ENCODE measurements at regions of chr3 and their contacts with region 1.

Region 1: DNA sequence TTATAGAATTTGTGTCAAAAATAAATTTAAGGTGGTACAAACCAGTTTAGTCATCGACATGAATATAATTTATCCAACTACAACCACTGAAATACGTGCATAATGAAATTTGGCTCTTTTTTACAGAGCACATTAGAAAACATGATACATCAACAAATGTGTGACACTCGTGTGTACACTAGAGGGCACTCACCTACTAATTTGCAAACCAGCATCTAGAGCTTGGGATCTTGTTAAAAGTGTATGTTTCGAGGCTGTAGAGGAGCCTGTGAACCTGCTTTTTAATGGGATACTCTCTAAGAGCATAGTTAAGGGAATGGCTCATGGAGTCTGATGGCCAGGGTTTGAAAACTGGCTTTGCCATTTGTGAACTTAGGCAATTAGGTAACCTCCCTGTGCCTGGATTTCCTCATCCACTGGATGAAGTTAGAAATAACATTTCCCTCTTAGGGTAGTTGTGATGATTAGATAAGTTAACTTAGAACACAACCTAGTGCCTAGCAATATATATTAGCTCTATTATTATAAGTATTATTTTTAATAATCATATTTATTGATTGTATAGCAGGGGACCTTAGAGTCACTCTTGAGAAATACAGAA is 8.8 kb upstream of the CPOX start:
- ATAC-seq: peak; percentile 61 to 86 (median 76)
- H3K4me3 ChIP-seq: no peak overlapping the region
- H3K27ac ChIP-seq: no peak overlapping the region
- H3K4me1 ChIP-seq: no peaks in the 10 kb centered on the region

Region 2: GRCh38 chr3:98778852-98779413 is 176.8 kb after region 1 on chr3:
- in situ Hi-C with region 1: loop called in 2 of 9 experiments (anchors 25 kb)
- ATAC-seq: peak in 7 of 8 experiments; percentile 41 to 74 (median 59)
- H3K4me3 ChIP-seq: no peak overlapping the region
- H3K27ac ChIP-seq: no peak overlapping the region
- H3K4me1 ChIP-seq: peaks cover 0 to 26% of the 10 kb centered on the region in 2 donors

Region 3: DNA sequence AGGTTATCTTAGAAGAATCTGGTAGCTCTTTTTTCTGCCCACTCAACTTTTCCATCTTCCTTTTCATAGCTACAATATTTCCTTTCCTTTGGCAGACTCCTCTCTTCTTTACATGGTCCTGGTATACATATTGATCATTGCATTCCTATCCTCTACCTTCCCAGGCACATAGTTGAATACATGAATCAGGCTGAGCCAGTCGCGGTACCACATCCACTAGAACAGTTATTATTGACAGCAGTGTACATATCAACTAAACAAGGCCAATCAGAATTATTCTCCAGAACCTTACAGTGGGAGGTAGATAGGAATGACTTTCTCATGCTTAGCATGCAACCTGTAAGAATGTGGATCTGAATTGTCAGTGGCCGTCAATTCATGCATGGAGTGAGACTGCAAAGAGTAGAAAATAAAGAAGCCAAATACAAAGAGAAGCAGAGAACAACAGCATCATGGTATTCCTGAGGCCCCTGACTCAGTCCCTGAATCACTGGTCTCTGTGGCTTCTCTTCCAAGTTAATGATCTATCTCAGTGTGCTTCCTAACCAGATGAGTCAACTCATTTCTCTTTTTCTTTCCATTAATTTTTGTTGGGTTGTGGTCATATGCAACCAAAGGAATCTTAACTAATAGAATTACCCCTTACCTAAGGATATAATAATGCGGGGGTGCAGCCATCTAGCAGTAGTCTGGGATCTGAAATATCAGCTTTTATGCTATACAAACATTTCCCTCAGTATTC is 360.2 kb after region 1 on chr3:
- in situ Hi-C with region 1: no loop called
- ATAC-seq: peak in 5 of 8 experiments; percentile 32 to 79 (median 40)
- H3K4me3 ChIP-seq: no peak overlapping the region
- H3K27ac ChIP-seq: no peak overlapping the region
- H3K4me1 ChIP-seq: peaks cover 5 to 24% of the 10 kb centered on the region in 2 donors

Region 4: DNA sequence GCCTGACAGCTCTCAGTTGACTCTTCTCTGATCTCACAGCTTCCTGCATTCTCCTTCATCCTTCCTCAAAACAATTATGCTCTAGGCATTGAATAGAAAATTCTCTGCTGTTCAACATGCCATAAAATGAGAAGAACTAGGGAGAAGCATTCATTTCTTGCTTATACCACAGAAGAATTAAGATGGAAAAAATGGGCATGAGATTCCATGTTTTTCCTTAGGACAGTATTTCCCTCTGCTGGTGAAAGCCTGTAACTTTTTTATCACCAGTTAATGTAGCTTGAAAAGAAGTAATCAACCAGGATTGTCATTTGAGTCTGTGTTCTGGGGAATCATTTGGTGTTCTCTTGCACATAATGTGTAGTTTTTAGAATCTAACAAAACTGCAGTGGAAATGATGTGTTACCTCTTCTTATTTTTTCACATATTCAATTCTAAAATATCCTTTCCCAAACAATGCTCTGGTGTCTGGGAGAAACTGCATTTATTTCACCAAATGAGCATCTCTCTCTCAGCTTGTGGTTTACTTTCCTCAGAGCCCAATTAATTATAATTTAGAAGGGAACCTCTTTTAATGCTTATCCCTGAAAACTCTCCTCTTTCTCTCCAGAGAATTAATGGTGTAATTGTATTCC is 392.1 kb after region 1 on chr3:
- in situ Hi-C with region 1: loop called in 4 of 9 experiments (anchors 25 kb)
- ATAC-seq: peak in 7 of 8 experiments; percentile 43 to 54 (median 49)
- H3K4me3 ChIP-seq: no peak overlapping the region
- H3K27ac ChIP-seq: no peak overlapping the region
- H3K4me1 ChIP-seq: no peaks in the 10 kb centered on the region